Kidney (tissue), 22 donors: ENCODE measurements at regions of chr5 and their contacts with region 1.

Region 1: DNA sequence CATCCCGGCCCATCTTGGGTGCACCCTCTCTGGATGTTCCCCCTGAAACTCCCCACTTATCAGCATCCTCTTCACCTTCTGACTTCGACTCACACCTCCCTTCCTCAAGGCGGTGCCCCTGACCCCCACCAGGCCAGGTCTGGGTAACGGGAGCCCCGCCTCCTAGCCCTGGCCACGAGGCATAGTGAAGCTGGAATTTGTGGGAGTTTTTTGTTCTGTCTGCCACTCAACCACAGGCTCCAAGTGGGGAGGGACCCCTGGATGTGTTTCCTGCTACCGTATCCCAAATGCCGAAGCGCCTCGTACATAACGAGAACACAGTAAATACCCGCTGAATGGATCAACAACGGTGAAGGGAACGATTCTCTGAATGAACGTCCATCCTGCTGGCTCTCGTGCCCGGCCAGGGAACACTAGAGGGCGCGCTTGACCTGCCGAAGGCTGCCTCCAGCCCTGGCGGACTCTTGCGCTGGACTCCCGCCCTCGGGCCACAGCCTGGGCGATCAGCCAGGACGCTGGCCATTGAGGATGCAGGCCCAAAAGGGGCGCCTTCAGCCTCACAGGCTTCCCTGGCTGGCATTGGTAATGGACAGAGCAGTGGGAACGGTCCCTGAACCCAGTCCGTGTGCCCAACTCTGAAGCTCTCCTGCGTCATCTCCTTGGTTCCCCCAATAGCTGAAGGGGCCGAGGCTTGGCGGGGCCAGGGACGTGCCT is 47.3 kb upstream of the PHYKPL start:
- DNase-seq: peak; percentile 86 to 96 (median 90)
- H3K4me3 ChIP-seq: no peak overlapping the region
- H3K27ac ChIP-seq: no peak overlapping the region
- H3K4me1 ChIP-seq: no peaks in the 10 kb centered on the region
- H3K27me3 ChIP-seq: no peaks in the 10 kb centered on the region
- CTCF ChIP-seq: peak; percentile 91

Region 2: GRCh38 chr5:178551059-178551458 is 271.2 kb after region 1 on chr5:
- intact Hi-C with region 1: loop called (anchors 5 kb)
- DNase-seq: peak in 1 of 5 donors; percentile 50
- H3K4me3 ChIP-seq: no peak overlapping the region
- H3K27ac ChIP-seq: no peak overlapping the region
- H3K4me1 ChIP-seq: peaks cover 0 to 6% (median 4%) of the 10 kb centered on the region in 3 donors
- H3K27me3 ChIP-seq: no peaks in the 10 kb centered on the region
- CTCF ChIP-seq: peak; percentile 52

Region 3: DNA sequence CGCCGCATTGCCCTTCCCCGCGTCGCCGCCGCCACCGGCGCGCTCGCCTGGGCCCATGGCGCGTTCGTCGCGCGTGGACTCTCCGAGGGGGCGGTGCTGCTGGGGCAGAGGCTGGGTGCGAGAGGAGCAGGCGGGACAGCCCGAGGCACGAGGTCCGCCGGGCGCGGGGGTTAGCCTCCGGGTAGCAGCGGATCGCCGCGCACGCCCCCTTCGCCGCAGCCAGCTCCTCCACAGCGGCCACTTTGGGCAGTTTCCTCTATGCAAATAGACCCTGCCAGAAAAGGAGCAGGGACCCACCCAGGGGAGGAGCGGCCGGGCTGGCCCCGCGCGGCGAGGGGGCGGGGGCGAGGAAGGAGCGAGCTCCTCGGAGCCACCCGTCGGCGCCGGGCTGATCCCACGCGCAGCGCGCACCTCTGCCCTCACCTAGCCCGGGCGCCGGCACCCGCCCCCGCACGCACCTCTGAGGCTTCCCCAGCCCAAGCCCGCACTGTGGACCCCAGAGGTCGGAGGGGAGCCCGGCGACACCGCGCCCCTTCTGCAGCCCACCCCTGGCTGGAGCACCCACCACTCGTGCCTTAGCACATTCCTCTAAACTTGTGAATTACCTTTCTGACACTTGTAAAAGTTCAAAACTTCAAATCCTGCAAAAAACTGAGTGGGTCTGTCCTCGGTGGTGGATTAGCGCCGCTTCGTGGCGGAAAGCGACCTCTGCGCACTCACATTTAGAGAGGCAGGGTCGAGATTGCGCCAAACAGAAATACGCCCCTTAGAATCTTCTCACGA is 310.4 kb after region 1 on chr5 and contains the start of gene COL23A1:
- intact Hi-C with region 1: loop called (anchors 10 kb)
- DNase-seq: peak; percentile 82 to 92 (median 85)
- H3K4me3 ChIP-seq: peak within 1 kb of the TSS; percentile 6 to 27 (median 26)
- H3K27ac ChIP-seq: no peak within 1 kb of the TSS
- H3K4me1 ChIP-seq: peaks cover 0 to 4% (median 4%) of the 10 kb centered on the region in 3 donors
- H3K27me3 ChIP-seq: peaks cover 4% of the 10 kb centered on the region
- CTCF ChIP-seq: peak; percentile 80
- total RNA-seq, gene COL23A1: 8.7 TPM